OCI-LY7 (cell line): ENCODE measurements at regions of chr4 and their contacts with region 1.

Region 1: DNA sequence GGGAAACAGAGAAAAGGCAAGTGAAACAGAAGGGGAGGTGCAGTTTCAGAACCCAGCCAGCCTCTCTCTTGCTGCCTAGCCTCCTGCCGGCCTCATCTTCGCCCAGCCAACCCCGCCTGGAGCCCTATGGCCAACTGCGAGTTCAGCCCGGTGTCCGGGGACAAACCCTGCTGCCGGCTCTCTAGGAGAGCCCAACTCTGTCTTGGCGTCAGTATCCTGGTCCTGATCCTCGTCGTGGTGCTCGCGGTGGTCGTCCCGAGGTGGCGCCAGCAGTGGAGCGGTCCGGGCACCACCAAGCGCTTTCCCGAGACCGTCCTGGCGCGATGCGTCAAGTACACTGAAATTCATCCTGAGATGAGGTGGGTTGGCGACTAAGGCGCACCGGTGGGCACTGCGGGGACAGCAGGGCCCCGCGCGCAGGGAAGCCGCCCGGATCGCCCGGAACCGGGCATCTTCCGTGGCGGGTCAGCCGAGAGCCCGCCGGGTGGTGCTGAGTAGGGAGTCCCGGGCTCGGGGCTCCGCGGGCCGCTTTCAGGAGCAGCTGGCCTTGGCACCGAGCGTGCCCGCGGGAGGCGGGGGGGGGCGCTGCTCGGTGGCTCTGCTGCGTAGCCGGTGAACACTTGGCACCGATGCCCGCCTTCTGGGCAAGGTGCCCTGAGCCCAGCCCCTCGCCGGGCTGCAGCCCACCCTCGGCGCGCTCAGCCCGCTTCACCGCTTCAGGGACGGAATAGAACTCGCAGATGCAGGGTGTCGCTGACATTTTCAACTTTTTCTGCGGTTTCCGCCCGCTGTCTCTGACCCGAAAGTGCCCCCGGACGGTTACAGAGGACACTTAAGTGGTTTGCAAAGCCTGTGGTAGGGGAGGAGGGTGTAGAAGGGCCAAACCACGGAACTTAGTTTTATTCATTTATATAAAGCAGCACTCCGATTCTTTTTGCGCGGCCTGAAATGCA is at the start of gene CD38:
- DNase-seq: peak; percentile 90
- H3K4me3 ChIP-seq: peak within 1 kb of the TSS; percentile 76
- H3K27ac ChIP-seq: peak within 1 kb of the TSS; percentile 96
- H3K4me1 ChIP-seq: peaks cover 62% of the 10 kb centered on the region
- CTCF ChIP-seq: peak; percentile 24; the same call in 1 of the 2 replicates
- total RNA-seq, gene CD38: 92.0 and 103 TPM in 2 replicates

Region 2: GRCh38 chr4:15001869-15002658 is 776.5 kb before region 1 on chr4 and contains the start of gene CPEB2:
- CTCF ChIA-PET with region 1: no interaction called
- POLR2A ChIA-PET with region 1: no interaction called
- intact Hi-C with region 1: loop called (anchors 5 kb)
- DNase-seq: peak; percentile 96
- H3K4me3 ChIP-seq: peak within 1 kb of the TSS; percentile 93
- H3K27ac ChIP-seq: peak within 1 kb of the TSS; percentile 91
- H3K4me1 ChIP-seq: peaks cover 22% of the 10 kb centered on the region
- CTCF ChIP-seq: no peak
- total RNA-seq, gene CPEB2: 2.2 and 2.3 TPM in 2 replicates

Region 3: DNA sequence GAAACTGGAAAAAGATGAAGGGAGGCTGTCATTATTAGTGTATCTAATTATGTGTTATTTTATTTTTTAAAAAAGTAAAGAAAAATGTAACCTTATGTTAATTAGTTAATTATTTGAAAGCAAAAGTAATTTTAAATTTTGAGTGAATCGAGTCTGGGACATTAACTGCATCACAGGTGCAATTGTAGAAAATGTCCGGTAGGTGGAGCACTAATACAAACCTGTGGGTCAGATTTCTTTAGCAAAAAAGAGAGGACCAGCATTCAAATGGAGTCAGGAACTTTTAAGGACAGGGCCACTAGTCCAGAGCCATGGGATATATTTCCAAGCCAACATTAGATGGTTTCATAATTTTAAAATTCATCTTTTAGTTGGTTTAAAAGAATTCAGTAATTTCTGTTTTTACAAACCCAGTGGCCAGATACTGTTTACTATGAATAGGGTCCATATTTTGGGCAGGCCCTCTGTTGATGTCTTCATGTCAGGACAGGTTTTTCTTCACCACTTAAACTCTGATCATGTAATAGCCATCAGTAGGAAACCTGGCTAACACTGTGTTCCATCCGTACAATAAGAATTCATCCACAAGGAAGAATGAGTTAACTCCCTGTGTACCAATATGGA is 48.5 kb before region 1 on chr4:
- CTCF ChIA-PET with region 1: no interaction called
- POLR2A ChIA-PET with region 1: interaction called, 5 read pairs
- intact Hi-C with region 1: loop called (anchors 1 kb)
- DNase-seq: peak; percentile 78
- H3K4me3 ChIP-seq: no peak overlapping the region
- H3K27ac ChIP-seq: no peak overlapping the region
- H3K4me1 ChIP-seq: peaks cover 42% of the 10 kb centered on the region
- CTCF ChIP-seq: peak; percentile 99

Region 4: GRCh38 chr4:15765910-15766697 is 12.5 kb before region 1 on chr4:
- CTCF ChIA-PET with region 1: interaction called, 4 read pairs
- POLR2A ChIA-PET with region 1: interaction called, 19 read pairs
- intact Hi-C with region 1: loop called (anchors 1 kb)
- DNase-seq: peak; percentile 82
- H3K4me3 ChIP-seq: peak overlapping the region; percentile 43
- H3K27ac ChIP-seq: peak overlapping the region; percentile 85
- H3K4me1 ChIP-seq: peaks cover 39% of the 10 kb centered on the region
- CTCF ChIP-seq: no peak

Region 5: GRCh38 chr4:15805583-15806517 is 27.3 kb after region 1 on chr4:
- CTCF ChIA-PET with region 1: no interaction called
- POLR2A ChIA-PET with region 1: interaction called, 8 read pairs
- intact Hi-C with region 1: loop called (anchors 2 kb)
- DNase-seq: peak; percentile 81
- H3K4me3 ChIP-seq: no peak overlapping the region
- H3K27ac ChIP-seq: peak overlapping the region; percentile 60
- H3K4me1 ChIP-seq: peaks cover 90% of the 10 kb centered on the region
- CTCF ChIP-seq: peak; percentile 94

Region 6: GRCh38 chr4:15906024-15906443 is 127.5 kb after region 1 on chr4:
- CTCF ChIA-PET with region 1: no interaction called
- POLR2A ChIA-PET with region 1: no interaction called
- intact Hi-C with region 1: no loop called
- DNase-seq: no peak
- H3K4me3 ChIP-seq: no peak overlapping the region
- H3K27ac ChIP-seq: no peak overlapping the region
- H3K4me1 ChIP-seq: no peaks in the 10 kb centered on the region
- CTCF ChIP-seq: no peak

Region 7: DNA sequence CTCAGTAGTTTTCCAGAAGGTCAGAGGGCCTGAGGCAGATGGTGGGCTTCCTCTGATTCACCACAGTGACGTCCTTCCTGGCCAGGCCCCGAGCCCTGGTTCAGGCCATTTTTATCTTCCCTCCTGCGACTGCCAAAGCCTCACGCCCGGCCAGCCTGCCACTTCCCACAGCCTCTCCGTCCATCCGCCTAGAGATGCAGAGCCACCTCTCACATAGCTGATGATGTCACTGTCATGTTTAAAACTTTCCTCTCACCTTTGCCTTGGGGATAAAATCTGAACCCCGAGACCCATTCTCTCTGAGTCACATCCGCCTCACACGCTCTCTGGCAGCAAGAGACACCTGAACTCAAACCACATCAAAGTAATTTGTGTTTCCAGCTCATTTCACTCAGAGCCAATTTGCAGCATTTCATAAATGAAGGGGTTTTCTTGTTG is 1558.0 kb after region 1 on chr4:
- CTCF ChIA-PET with region 1: no interaction called
- POLR2A ChIA-PET with region 1: no interaction called
- intact Hi-C with region 1: loop called (anchors 10 kb)
- DNase-seq: peak; percentile 95
- H3K4me3 ChIP-seq: peak overlapping the region; percentile 50
- H3K27ac ChIP-seq: peak overlapping the region; percentile 92
- H3K4me1 ChIP-seq: peaks cover 81% of the 10 kb centered on the region
- CTCF ChIP-seq: no peak